Activated naive CD4-positive, alpha-beta T cell treated with anti-CD3 and anti-CD28 coated beads, Interleukin-2, amount 10 ng/mL, durations not matched to agents 7 days and 5 days (primary cell): ENCODE measurements at regions of chrX and their contacts with region 1.

Region 1: DNA sequence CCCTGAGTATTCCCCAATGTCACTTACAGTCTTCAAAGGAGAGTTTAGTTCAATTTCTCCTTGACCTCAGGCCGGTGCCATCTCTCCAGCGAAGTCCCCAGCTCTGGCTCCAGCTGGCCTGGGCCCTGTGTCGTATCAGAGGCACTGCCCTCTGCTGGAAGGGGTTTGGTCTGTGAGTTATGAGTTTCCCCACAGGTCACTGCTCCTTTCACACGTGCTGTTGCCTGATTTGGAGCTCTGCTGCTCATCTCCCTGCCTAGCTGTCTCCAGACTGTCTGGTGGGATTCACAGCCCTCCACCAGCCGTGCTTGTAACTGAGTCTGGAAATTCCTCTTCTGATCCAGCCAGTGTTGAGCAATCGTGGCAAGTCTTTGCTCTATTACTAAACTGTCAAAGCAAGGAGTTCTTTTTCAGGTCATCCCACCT is at the start of gene RAP2C:
- DNase-seq: peak; percentile 70
- H3K4me3 Mint-ChIP-seq: peak within 1 kb of the TSS; percentile 76
- H3K27ac Mint-ChIP-seq: peak within 1 kb of the TSS; percentile 92
- H3K4me1 Mint-ChIP-seq: peaks cover 24% of the 10 kb centered on the region
- H3K27me3 Mint-ChIP-seq: no peaks in the 10 kb centered on the region

Region 2: DNA sequence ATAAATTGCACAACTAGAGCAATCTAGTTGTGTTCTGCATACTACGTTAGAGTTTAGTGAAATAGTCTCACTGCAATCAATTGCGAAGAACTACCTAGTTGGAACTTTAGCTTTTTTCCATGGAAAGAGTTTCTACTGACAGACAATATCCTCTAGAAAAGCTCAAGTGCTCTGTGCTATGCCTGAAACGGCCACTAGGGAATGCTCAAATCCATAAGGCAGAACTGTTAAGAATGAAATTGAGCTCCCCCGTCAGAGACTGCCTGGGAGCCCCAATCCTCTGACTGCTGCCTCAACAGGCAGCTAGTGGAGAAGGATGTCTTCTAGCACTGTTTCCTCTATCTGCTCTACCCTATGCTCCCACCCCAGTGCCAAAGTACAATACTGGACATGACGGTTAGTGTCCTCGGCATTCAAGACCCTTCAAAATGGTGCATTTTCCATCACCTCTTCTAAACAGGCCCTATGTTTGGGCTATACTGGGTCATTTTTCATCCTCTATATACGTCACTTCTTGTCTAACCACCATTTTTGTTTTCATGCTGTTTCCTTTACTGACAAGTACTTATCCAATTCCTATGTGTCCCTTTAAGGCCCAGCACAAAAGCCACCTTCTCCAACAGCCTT is 126.8 kb before region 1 on chrX:
- CTCF ChIA-PET with region 1: interaction called, 41 read pairs
- DNase-seq: peak; percentile 64
- H3K4me3 Mint-ChIP-seq: no peak overlapping the region
- H3K27ac Mint-ChIP-seq: no peak overlapping the region
- H3K4me1 Mint-ChIP-seq: peaks cover 10% of the 10 kb centered on the region
- H3K27me3 Mint-ChIP-seq: peaks cover 4% of the 10 kb centered on the region

Region 3: GRCh38 chrX:132671229-132671641 is 451.9 kb after region 1 on chrX:
- CTCF ChIA-PET with region 1: no interaction called
- DNase-seq: no peak
- H3K4me3 Mint-ChIP-seq: no peak overlapping the region
- H3K27ac Mint-ChIP-seq: no peak overlapping the region
- H3K4me1 Mint-ChIP-seq: no peaks in the 10 kb centered on the region
- H3K27me3 Mint-ChIP-seq: peaks cover 3% of the 10 kb centered on the region

Region 4: GRCh38 chrX:132786217-132786616 is 566.9 kb after region 1 on chrX:
- CTCF ChIA-PET with region 1: no interaction called
- DNase-seq: no peak
- H3K4me3 Mint-ChIP-seq: no peak overlapping the region
- H3K27ac Mint-ChIP-seq: no peak overlapping the region
- H3K4me1 Mint-ChIP-seq: no peaks in the 10 kb centered on the region
- H3K27me3 Mint-ChIP-seq: no peaks in the 10 kb centered on the region